HEK293T (cell line): ENCODE measurements at regions of chr1 and their contacts with region 1.

Region 1: DNA sequence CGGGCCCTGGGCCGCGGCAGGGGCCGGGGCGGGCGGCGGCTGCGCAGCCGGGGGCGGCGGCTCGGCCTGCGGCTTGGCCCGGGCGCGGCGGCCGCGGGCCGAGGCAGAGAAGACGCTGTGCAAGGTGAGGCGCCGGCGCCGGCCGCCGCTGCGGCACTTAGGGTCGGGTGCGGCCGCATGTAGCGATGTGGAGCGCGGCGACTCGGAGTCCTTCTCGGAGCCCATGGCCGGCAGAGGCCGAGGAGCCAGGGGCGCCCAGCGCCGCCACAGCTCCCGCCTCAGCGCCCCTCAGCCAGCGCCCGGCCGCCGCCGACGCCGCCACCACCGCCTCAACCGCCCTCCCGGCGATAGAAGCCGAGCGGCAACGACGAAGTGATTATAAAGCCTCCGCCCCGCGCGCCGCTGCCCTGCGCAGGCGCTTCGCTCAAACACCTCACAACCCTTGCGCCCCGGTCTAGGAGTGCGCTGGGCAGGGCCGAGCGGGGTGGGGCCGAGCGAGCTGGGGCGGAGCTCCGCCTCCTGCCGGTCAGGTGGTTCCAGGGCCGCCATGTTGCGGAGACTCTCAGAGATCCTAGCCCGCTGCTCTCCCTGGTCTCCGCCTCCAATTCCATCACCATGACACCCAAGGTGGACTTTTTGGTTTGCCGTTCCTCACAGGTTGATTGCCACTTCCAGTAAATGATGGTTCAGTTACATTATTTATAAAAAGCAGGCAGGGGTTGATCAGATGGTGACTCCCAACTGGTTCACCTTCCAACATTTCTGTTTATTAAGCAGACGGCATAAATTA is at the start of gene RNF19B:
- DNase-seq: peak; percentile 99

Region 2: DNA sequence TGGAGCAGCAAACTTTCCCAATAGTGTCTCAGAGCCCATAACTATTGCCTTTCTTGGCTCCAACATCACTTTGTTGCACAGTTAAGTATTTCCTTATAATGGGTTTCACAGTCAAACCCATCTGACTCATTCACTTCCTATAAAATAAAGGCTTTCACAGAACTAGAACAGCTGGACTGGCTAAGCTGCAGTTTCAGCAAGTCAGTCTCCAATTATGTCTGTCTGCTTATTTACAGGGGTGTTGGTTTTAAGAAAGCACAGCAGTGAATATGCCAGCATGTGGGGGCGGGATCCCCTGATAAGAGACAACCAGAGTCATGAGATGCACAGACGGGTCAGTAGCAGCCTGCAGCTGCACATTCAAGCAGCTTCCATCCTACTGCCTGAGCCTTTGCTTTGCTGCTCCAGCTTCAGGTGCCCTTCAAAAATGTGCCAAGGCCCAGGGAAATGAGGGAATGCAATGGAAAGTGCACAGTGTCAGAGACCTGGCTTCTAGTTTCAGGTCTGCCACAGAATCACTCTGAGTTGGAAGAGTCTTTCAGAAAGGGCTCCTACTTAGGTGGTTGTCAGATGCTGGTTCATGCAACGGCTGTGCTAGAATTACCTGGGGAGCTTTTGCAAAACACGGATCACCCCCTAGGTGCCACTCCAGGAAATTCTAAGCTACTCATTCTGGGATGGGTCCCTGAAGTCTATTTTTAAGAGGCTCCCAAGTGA is 24.8 kb before region 1 on chr1:
- CTCF ChIA-PET with region 1: no interaction called
- POLR2A ChIA-PET with region 1: no interaction called
- DNase-seq: no peak

Region 3: GRCh38 chr1:32953495-32953894 is 11.2 kb before region 1 on chr1:
- CTCF ChIA-PET with region 1: no interaction called
- POLR2A ChIA-PET with region 1: interaction called, 17 read pairs
- DNase-seq: no peak

Region 4: DNA sequence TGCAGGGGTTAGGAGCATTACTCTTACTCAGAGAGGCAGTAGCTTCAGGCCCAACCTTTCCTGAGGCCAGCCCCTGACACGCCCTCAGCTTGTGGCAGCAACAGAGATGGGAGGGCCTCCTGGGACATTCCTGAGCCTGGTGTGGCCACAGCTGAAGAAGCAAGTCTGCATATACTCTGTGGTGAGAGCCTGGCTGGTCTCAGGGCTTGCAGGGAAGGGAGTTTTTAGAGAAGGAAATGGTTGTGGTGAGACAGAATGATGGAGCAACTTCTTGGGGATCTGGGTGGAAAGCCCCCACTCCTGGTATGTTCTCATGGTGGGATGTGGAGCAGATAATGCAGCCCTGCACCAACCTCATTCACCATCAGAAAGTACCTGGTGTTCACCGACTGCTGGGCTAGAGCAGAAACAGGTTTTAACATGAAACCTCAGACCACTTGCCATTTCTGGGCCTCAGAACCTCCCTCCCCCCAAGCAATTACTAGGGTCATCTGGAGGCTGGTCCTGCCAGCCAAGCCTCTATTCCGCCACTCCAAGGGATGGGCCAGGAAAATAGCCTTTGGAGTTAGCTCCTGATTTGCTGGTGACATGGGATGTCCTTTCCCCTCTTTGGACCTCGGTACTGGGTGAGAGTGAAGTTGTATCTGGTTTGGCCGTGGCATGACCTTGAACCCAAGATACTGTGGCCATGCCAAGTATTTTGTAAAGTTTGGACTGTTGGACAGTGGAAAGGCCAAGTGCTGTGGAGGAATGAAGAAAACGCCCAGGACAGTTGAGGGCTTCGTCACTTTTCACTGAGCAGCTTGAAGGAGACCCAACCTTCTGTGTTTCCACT is 28.1 kb after region 1 on chr1:
- CTCF ChIA-PET with region 1: no interaction called
- POLR2A ChIA-PET with region 1: interaction called, 15 read pairs
- DNase-seq: peak; percentile 74